ENCODE measurements at regions of chr2 and their contacts with region 1.

Region 1: GRCh38 chr2:14776216-14776615 is 143.7 kb downstream of the LRATD1 start:
- DNase-seq: no peak
- ATAC-seq: no peak
- H3K4me3 ChIP-seq: no peak overlapping the region
- H3K27ac ChIP-seq: no peak overlapping the region
- H3K4me1 ChIP-seq: peaks cover 10% of the 10 kb centered on the region
- H3K27me3 ChIP-seq: 0 out of 5 replicates have a peak, but pooled peaks cover 0 to 3% of the 10 kb centered on the region in 2 experiments
- CTCF ChIP-seq: no peak
- EP300 ChIP-seq: no peak
- POLR2A ChIP-seq: no peak
- RAD21 ChIP-seq: no peak

Region 2: GRCh38 chr2:14756976-14757657 is 19.1 kb before region 1 on chr2:
- CTCF ChIA-PET with region 1: no interaction called
- POLR2A ChIA-PET with region 1: no interaction called
- in situ Hi-C with region 1: no loop called
- intact Hi-C with region 1: loop called (anchors 1 kb)
- DNase-seq: no peak
- ATAC-seq: no peak
- H3K4me3 ChIP-seq: no peak overlapping the region
- H3K27ac ChIP-seq: no peak overlapping the region
- H3K4me1 ChIP-seq: no peaks in the 10 kb centered on the region
- H3K27me3 ChIP-seq: peaks cover 0 to 8% of the 10 kb centered on the region in 2 experiments; a peak in 1 of 5 replicates
- CTCF ChIP-seq: no peak
- EP300 ChIP-seq: no peak
- POLR2A ChIP-seq: no peak
- RAD21 ChIP-seq: no peak